ENCODE measurements at regions of chr2 and their contacts with region 1.

Region 1: DNA sequence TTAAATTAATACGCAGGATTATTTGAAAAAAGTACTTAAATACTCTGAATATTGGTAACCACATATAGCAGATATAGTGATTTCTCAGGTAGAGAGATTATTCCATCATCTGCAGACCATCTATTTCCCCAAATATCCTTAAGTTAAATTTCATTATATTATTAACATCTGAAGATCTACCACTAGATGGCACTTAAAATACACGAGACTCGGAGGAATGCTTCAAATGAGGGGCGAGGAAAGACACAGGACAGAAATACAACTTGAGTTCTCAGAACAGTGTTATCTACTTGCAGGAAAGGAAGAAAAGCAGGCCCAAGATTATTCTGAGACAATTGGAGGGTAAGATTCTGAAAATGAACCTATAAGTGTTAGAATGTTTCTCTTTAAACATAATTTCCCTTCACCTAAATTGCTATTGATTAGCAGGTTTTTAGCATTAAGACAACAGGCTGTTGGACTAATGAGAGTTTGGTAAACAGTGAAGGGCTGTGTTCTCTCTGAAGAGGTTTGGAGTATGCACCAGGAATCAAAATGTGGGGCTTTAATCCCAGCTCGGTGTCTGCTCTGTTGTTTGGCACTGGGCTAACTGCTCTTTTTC is 76.9 kb upstream of the GCFC2 start:
- DNase-seq: peak; percentile 69
- ATAC-seq: no peak
- H3K4me3 ChIP-seq: no peak overlapping the region
- H3K27ac ChIP-seq: no peak overlapping the region
- H3K4me1 ChIP-seq: peaks cover 31% of the 10 kb centered on the region
- H3K27me3 ChIP-seq: no peaks in the 10 kb centered on the region
- CTCF ChIP-seq: peak; percentile 84

Region 2: GRCh38 chr2:75737961-75738360 is 49.7 kb before region 1 on chr2:
- CTCF ChIA-PET with region 1: no interaction called
- POLR2A ChIA-PET with region 1: no interaction called
- intact Hi-C with region 1: no loop called
- DNase-seq: no peak
- ATAC-seq: no peak
- H3K4me3 ChIP-seq: no peak overlapping the region
- H3K27ac ChIP-seq: no peak overlapping the region
- H3K4me1 ChIP-seq: no peaks in the 10 kb centered on the region
- H3K27me3 ChIP-seq: peaks cover 20% of the 10 kb centered on the region; the same call in 1 of the 2 replicates
- CTCF ChIP-seq: no peak

Region 3: GRCh38 chr2:75833386-75833785 is 45.8 kb after region 1 on chr2:
- CTCF ChIA-PET with region 1: interaction called, 5 read pairs
- POLR2A ChIA-PET with region 1: no interaction called
- intact Hi-C with region 1: loop called (anchors 2 kb)
- DNase-seq: peak; percentile 58
- ATAC-seq: no peak
- H3K4me3 ChIP-seq: no peak overlapping the region
- H3K27ac ChIP-seq: no peak overlapping the region
- H3K4me1 ChIP-seq: peaks cover 12% of the 10 kb centered on the region
- H3K27me3 ChIP-seq: 0 out of 2 replicates have a peak, but pooled peaks cover 6% of the 10 kb centered on the region
- CTCF ChIP-seq: no peak

Region 4: DNA sequence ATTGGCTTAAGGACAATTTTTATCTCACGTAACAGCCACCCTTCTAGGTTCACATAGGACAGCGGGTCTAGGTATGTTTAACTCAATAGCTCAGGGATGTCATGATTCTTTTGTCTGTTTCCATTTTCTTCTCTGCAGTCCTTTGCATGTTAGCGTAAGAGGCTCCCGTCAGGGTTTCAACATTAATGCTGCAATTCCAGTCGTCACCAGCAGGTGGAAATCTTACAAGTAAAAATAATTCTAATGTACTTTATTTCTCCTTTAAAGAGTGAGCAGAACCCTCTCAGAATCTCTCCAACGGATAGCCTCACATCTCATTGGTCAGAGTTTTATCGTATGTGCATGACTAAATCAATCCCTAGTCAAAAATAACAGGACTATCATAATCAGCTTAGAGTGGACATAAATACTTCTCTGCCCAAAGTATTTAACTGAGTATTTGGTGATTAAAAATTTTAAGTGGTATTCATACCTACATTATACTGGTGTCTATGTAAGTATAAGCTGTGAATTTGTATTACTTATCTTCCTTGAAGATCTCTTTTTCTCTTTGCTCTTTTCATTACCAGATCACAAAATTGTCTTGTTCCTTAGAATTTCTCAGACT is 410.3 kb after region 1 on chr2:
- CTCF ChIA-PET with region 1: no interaction called
- POLR2A ChIA-PET with region 1: no interaction called
- intact Hi-C with region 1: loop called (anchors 5 kb)
- DNase-seq: peak; percentile 83
- ATAC-seq: peak; percentile 58; the same call in 1 of the 2 replicates
- H3K4me3 ChIP-seq: peak overlapping the region; percentile 35; the same call in 1 of the 2 replicates
- H3K27ac ChIP-seq: no peak overlapping the region
- H3K4me1 ChIP-seq: no peaks in the 10 kb centered on the region
- H3K27me3 ChIP-seq: no peaks in the 10 kb centered on the region
- CTCF ChIP-seq: peak; percentile 79

Region 5: GRCh38 chr2:76599732-76600368 is 812.2 kb after region 1 on chr2:
- CTCF ChIA-PET with region 1: interaction called, 3 read pairs
- POLR2A ChIA-PET with region 1: no interaction called
- intact Hi-C with region 1: loop called (anchors 1 kb)
- DNase-seq: peak; percentile 84
- ATAC-seq: peak; percentile 85
- H3K4me3 ChIP-seq: no peak overlapping the region
- H3K27ac ChIP-seq: no peak overlapping the region
- H3K4me1 ChIP-seq: no peaks in the 10 kb centered on the region
- H3K27me3 ChIP-seq: no peaks in the 10 kb centered on the region
- CTCF ChIP-seq: peak; percentile 89